BJ (cell line): ENCODE measurements at regions of chr1 and their contacts with region 1.

Region 1: GRCh38 chr1:3564921-3565827 is 46.1 kb downstream of the MEGF6 start:
- DNase-seq: no peak
- H3K4me3 ChIP-seq: no peak overlapping the region
- H3K27me3 ChIP-seq: no peaks in the 10 kb centered on the region
- CTCF ChIP-seq: peak; percentile 98

Region 2: DNA sequence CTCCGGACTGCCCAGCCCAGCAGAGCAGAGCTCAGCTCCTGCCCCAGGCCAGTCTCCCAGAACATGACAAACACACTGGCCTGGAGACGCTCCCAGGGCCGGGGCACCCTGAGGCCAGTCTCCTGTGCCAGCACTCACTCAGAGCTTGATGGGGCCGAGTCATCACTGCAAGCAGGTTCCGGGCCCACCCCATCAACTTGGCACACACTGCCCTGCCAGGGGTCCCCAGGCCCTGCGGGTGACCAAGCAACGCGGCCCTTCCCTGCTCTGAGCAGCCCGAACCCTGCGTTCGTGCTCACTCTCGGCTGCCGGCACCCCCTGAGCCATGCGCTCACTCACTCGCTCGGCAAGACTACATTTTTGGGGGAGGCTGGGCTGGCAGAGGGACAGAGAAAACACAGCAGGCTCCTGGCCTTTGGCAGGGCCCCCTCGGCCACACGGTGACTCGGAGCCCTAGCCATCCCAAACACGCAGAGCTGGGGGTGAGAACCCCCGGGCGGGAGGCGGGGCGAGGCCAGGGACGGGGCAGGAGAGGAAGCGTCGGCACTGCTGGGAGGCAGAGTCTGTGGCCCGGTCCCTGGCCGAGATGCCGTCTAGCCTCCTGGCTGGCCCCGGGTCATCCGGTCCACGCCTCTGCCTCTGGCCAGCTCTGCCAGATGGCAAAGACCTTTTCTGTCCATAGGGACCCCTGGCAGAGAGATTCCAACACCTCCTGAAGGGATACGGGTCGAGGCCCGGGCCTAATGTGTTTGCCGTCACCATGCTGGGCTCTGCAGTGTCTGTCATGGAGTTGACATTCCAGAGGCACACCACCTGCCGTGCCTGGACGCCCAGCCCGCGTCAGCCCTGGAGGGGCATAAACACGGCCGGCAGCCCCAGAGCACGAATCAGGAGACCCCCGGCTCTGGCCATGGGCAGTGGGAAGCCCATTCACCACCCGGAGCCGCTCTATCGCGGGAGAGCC is 21.8 kb before region 1 on chr1:
- CTCF ChIA-PET with region 1: interaction called, 10 read pairs
- POLR2A ChIA-PET with region 1: no interaction called
- DNase-seq: peak; percentile 92
- H3K4me3 ChIP-seq: no peak overlapping the region
- H3K27me3 ChIP-seq: no peaks in the 10 kb centered on the region
- CTCF ChIP-seq: no peak

Region 3: GRCh38 chr1:3553166-3553939 is 11.8 kb before region 1 on chr1:
- CTCF ChIA-PET with region 1: interaction called, 13 read pairs
- POLR2A ChIA-PET with region 1: no interaction called
- DNase-seq: no peak
- H3K4me3 ChIP-seq: no peak overlapping the region
- H3K27me3 ChIP-seq: no peaks in the 10 kb centered on the region; the same call in none of the 2 replicates
- CTCF ChIP-seq: no peak

Region 4: GRCh38 chr1:3577300-3577699 is 12.1 kb after region 1 on chr1:
- CTCF ChIA-PET with region 1: interaction called, 24 read pairs
- POLR2A ChIA-PET with region 1: no interaction called
- DNase-seq: no peak
- H3K4me3 ChIP-seq: no peak overlapping the region
- H3K27me3 ChIP-seq: no peaks in the 10 kb centered on the region; the same call in none of the 2 replicates
- CTCF ChIP-seq: no peak

Region 5: DNA sequence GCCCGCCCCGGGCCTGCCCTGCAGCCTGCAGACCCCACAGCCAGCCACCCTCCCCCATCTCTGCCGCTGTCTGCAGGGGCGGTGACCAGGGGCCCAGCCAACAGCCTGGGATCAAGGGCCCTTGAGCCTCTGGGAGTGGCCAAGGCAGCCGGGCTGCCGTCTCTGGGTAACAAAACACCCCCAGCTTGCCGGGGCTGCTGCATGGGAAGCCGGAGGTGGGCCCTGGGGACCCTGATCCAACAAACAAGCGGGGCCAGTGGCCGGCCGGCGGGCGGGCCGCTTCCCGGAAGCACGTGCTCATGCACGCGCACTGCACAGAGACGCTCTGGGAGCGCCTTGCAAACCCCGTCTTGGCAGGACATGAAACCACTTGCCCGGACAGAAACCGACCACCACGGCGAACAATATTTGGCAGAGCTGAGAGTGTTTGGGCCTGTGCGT is 32.9 kb after region 1 on chr1:
- CTCF ChIA-PET with region 1: interaction called, 10 read pairs
- POLR2A ChIA-PET with region 1: no interaction called
- DNase-seq: no peak
- H3K4me3 ChIP-seq: no peak overlapping the region
- H3K27me3 ChIP-seq: no peaks in the 10 kb centered on the region
- CTCF ChIP-seq: no peak

Region 6: DNA sequence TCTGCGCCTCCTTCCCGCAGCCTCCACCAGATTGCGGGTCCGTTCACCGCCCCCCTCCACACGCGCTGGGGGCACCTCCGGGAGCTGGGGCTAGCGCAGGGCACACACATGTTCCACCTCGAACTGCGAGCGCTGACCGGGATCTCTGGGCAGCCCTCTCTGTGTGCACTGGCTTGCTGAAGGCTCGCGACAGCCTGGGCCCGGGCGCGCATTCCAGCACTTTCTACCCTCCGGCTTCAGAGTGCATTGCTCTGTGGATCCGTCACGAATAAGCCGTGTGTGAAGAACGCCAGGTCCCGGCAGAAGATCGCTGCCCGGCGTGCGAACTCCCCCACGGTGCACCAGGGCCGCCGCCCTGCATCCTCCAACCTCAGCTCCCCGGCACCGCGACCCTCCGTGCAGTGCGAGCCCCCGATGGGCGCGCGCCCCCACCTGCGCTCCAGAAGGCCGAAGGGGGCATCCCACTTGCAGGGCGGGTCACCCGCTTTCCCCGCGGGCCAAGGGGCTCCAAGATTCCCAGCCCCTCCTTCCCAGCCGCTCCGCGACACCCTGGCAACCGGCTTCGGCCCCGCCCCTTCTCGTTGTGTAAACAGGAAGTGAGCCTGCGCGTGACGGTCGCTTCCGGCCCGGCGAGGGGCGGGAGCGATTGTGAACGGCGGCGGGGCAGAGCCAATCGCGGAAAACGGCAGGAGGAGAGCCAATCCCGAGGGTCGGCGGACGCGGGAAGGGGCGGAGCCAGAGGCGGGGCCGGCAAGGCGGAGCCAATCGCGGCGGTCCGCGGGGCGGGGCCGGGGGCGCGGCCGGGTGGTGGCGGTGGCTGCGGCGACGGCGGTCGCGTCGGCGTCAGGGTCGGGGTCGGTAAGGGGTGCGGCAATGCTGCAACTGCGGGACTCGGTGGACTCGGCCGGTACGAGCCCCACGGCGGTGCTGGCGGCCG is 59.3 kb after region 1 on chr1 and contains the start of gene TPRG1L:
- CTCF ChIA-PET with region 1: interaction called, 39 read pairs
- POLR2A ChIA-PET with region 1: no interaction called
- DNase-seq: peak; percentile 74
- H3K4me3 ChIP-seq: peak within 1 kb of the TSS; percentile 98
- H3K27me3 ChIP-seq: no peaks in the 10 kb centered on the region
- CTCF ChIP-seq: no peak
- polyA plus RNA-seq, gene TPRG1L: 45.8 and 52.1 TPM in 2 replicates